Stomach (tissue), 19 donors: ENCODE measurements at regions of chr6 and their contacts with region 1.

Region 1: GRCh38 chr6:63579937-63580703 is 7.8 kb downstream of the LOC128125822 start:
- DNase-seq: no peak
- H3K4me3 ChIP-seq: no peak overlapping the region
- H3K27ac ChIP-seq: no peak overlapping the region
- H3K4me1 ChIP-seq: peaks cover 0 to 34% (median 14%) of the 10 kb centered on the region in 4 donors
- H3K27me3 ChIP-seq: no peaks in the 10 kb centered on the region
- CTCF ChIP-seq: no peak
- EP300 ChIP-seq: no peak
- POLR2A ChIP-seq: no peak

Region 2: GRCh38 chr6:63355632-63356031 is 224.5 kb before region 1 on chr6:
- intact Hi-C with region 1: loop called (anchors 5 kb)
- DNase-seq: no peak
- H3K4me3 ChIP-seq: no peak overlapping the region
- H3K27ac ChIP-seq: no peak overlapping the region
- H3K4me1 ChIP-seq: peaks cover 0 to 33% (median 13%) of the 10 kb centered on the region in 4 donors
- H3K27me3 ChIP-seq: no peaks in the 10 kb centered on the region
- CTCF ChIP-seq: no peak
- EP300 ChIP-seq: no peak
- POLR2A ChIP-seq: no peak

Region 3: DNA sequence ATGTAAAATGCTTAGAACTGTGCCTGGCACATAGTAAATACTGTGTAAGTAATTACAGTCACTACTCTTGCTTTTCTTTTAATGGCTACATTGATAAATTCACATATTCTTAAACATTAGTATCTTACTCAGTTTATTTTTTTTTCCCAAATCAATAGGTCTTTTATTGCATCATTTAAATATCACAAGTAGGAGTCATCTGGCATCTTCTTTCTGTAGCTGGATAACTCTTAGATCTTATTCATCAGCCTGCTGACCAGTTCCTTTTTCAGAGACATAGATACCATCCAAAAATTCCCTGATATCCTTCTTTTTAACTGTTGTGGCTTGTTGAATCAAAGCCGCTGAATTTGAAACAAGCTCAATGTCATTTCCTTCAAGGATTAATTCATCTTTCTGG is 35.5 kb after region 1 on chr6:
- intact Hi-C with region 1: no loop called
- DNase-seq: no peak
- H3K4me3 ChIP-seq: no peak overlapping the region
- H3K27ac ChIP-seq: no peak overlapping the region
- H3K4me1 ChIP-seq: no peaks in the 10 kb centered on the region
- H3K27me3 ChIP-seq: no peaks in the 10 kb centered on the region
- CTCF ChIP-seq: no peak
- EP300 ChIP-seq: no peak
- POLR2A ChIP-seq: no peak